ENCODE measurements at regions of chr7 and their contacts with region 1.

Region 1: GRCh38 chr7:26365077-26365900 is 73.6 kb downstream of the SNX10 start:
- DNase-seq: peak; percentile 88 to 94 (median 91)
- H3K4me3 ChIP-seq: no peak overlapping the region
- H3K27ac ChIP-seq: no peak overlapping the region
- H3K4me1 ChIP-seq: peaks cover 5 to 31% (median 24%) of the 10 kb centered on the region in 4 experiments
- H3K27me3 ChIP-seq: no peaks in the 10 kb centered on the region

Region 2: GRCh38 chr7:26090927-26091519 is 274.3 kb before region 1 on chr7:
- CTCF ChIA-PET with region 1: interaction called, 29 read pairs
- POLR2A ChIA-PET with region 1: no interaction called
- DNase-seq: peak; percentile 75 to 78 (median 77)
- H3K4me3 ChIP-seq: peak overlapping the region in 5 of 7 experiments; percentile 11 to 69 (median 33)
- H3K27ac ChIP-seq: peak overlapping the region in 1 of 2 experiments; percentile 44
- H3K4me1 ChIP-seq: peaks cover 0 to 16% (median 6%) of the 10 kb centered on the region in 4 experiments
- H3K27me3 ChIP-seq: no peaks in the 10 kb centered on the region

Region 3: GRCh38 chr7:26200444-26201246 is 164.6 kb before region 1 on chr7 and contains the start of gene HNRNPA2B1:
- CTCF ChIA-PET with region 1: interaction called, 10 read pairs
- POLR2A ChIA-PET with region 1: interaction called, 4 read pairs
- DNase-seq: peak; percentile 99 to 100 (median 100)
- H3K4me3 ChIP-seq: peak within 1 kb of the TSS; percentile 95 to 100 (median 99)
- H3K27ac ChIP-seq: peak within 1 kb of the TSS; percentile 98 to 99
- H3K4me1 ChIP-seq: peaks cover 36 to 55% (median 50%) of the 10 kb centered on the region in 4 experiments
- H3K27me3 ChIP-seq: no peaks in the 10 kb centered on the region

Region 4: GRCh38 chr7:26348234-26348851 is 16.9 kb before region 1 on chr7:
- CTCF ChIA-PET with region 1: interaction called, 24 read pairs
- POLR2A ChIA-PET with region 1: no interaction called
- DNase-seq: no peak
- H3K4me3 ChIP-seq: no peak overlapping the region
- H3K27ac ChIP-seq: no peak overlapping the region
- H3K4me1 ChIP-seq: peaks cover 0 to 7% (median 2%) of the 10 kb centered on the region in 4 experiments
- H3K27me3 ChIP-seq: no peaks in the 10 kb centered on the region

Region 5: GRCh38 chr7:26673271-26673670 is 308.0 kb after region 1 on chr7:
- CTCF ChIA-PET with region 1: interaction called, 198 read pairs
- POLR2A ChIA-PET with region 1: no interaction called
- DNase-seq: peak in 1 of 3 donors; percentile 66
- H3K4me3 ChIP-seq: peak overlapping the region in 4 of 7 experiments; percentile 44 to 73 (median 53)
- H3K27ac ChIP-seq: peak overlapping the region; percentile 81 to 83
- H3K4me1 ChIP-seq: peaks cover 10 to 76% (median 49%) of the 10 kb centered on the region in 4 experiments
- H3K27me3 ChIP-seq: no peaks in the 10 kb centered on the region

Region 6: GRCh38 chr7:27160546-27161213 is 795.4 kb after region 1 on chr7:
- CTCF ChIA-PET with region 1: interaction called, 33 read pairs
- POLR2A ChIA-PET with region 1: interaction called, 5 read pairs
- DNase-seq: peak; percentile 92 to 96 (median 95)
- H3K4me3 ChIP-seq: peak overlapping the region; percentile 56 to 100 (median 88)
- H3K27ac ChIP-seq: peak overlapping the region; percentile 86 to 96
- H3K4me1 ChIP-seq: peaks cover 14 to 68% (median 64%) of the 10 kb centered on the region in 4 experiments
- H3K27me3 ChIP-seq: no peaks in the 10 kb centered on the region